Activated T-helper 1 cell treated with anti-CD3 and anti-CD28 coated beads, Interleukin-12 subunit alpha, Interleukin-12 subunit beta, Interleukin-2, Interleukin-4 antibody, amounts not matched to agents 30 ng/mL and 10 ng/mL and 1 ng/mL, durations not matched to agents 14 hours and 24 hours and 36 hours (primary cell): ENCODE measurements at regions of chr5 and their contacts with region 1.

Region 1: DNA sequence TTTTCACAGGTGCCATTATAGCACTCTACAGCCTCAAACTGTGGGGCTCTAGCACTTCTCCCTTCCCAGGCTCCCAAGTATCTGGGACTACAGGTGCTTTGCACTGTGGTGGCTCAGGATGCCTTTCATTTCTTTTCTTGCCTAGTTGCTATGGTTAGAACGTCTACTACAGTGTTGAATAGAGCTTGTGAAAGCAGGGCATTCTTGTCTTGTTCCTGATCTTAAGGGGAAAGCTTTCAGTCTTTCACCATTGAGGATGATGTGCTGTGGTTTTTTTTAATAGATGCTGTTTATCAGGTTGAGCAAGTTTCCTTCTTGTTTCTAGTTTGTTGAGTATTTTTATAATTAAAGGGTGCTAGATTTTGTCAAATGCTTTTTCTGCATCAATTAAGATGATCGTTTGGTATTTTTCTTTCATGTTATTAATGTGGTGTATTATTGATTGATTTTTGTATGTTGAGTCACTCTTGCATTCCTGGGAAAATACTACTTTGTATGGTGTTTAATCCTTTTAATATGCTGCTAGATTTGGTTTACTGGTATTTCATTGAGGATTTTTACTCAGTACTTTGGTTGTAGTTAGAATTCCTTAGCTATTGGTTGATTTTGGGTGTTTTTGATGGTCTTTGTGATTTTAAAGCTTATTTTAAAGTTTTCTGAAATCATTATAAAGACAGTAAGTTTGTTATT is 35.6 kb downstream of the GPBP1 start:
- DNase-seq: no peak
- H3K4me3 Mint-ChIP-seq: no peak overlapping the region
- H3K27ac Mint-ChIP-seq: peak overlapping the region; percentile 32
- H3K4me1 Mint-ChIP-seq: peaks cover 48% of the 10 kb centered on the region
- H3K27me3 Mint-ChIP-seq: no peaks in the 10 kb centered on the region

Region 2: GRCh38 chr5:56856541-56857178 is 352.8 kb before region 1 on chr5:
- intact Hi-C with region 1: no loop called
- DNase-seq: no peak
- H3K4me3 Mint-ChIP-seq: no peak overlapping the region
- H3K27ac Mint-ChIP-seq: no peak overlapping the region
- H3K4me1 Mint-ChIP-seq: peaks cover 38% of the 10 kb centered on the region
- H3K27me3 Mint-ChIP-seq: no peaks in the 10 kb centered on the region

Region 3: GRCh38 chr5:56941981-56942380 is 267.5 kb before region 1 on chr5:
- intact Hi-C with region 1: no loop called
- DNase-seq: no peak
- H3K4me3 Mint-ChIP-seq: no peak overlapping the region
- H3K27ac Mint-ChIP-seq: no peak overlapping the region
- H3K4me1 Mint-ChIP-seq: peaks cover 12% of the 10 kb centered on the region
- H3K27me3 Mint-ChIP-seq: no peaks in the 10 kb centered on the region

Region 4: DNA sequence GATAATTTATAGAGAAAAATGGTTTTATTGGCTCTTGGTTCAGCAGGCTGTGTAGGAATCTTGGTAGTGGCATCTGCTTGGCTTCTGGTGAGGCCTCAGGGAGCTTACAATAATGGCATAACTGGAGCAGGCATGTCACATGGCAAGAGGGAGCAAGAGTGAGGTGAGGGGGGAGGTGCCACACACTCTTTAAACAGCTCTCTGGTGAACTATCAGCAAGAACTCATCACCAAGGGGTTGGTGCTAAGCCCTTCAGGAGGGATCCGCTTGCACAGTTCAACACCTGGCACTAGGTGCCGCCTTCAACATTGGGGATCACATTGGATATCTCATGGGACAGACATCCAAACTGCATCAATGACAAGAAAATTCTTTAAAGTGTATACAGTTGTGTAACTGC is 25.2 kb before region 1 on chr5:
- intact Hi-C with region 1: loop called (anchors 1 kb)
- DNase-seq: no peak
- H3K4me3 Mint-ChIP-seq: peak overlapping the region; percentile 27
- H3K27ac Mint-ChIP-seq: no peak overlapping the region
- H3K4me1 Mint-ChIP-seq: peaks cover 73% of the 10 kb centered on the region
- H3K27me3 Mint-ChIP-seq: no peaks in the 10 kb centered on the region